ENCODE measurements at regions of chr10 and their contacts with region 1.

Region 1: DNA sequence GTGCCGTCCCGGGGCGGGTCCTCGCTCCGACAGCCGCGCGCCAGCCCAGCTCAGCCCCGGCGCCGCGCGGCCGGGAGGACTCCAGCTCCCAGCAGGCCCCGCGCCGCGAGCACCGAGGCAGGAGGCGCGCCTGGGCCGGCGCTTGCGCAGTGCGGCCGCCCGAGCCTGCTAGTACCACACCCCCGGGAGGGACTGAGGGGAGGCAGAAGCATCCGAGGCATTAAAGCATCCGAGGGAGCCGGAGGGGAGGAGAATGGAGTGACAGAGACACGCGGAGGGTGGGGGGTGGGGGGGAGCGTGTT is at the start of gene GRK5:
- DNase-seq: peak; percentile 90
- ATAC-seq: peak; percentile 86
- H3K4me3 Mint-ChIP-seq: peak within 1 kb of the TSS; percentile 87
- H3K27ac Mint-ChIP-seq: peak within 1 kb of the TSS; percentile 95; the same call in 1 of the 2 replicates
- H3K4me1 Mint-ChIP-seq: peaks cover 40% of the 10 kb centered on the region
- H3K27me3 Mint-ChIP-seq: peaks cover 18% of the 10 kb centered on the region
- CTCF ChIP-seq: no peak
- total RNA-seq, gene GRK5: 1.9 to 2.3 TPM (median 2.2 TPM) in 3 replicates

Region 2: GRCh38 chr10:119070395-119071165 is 136.7 kb before region 1 on chr10:
- CTCF ChIA-PET with region 1: no interaction called
- POLR2A ChIA-PET with region 1: no interaction called
- DNase-seq: no peak
- ATAC-seq: no peak
- H3K4me3 Mint-ChIP-seq: no peak overlapping the region
- H3K27ac Mint-ChIP-seq: peak overlapping the region; percentile 30; the same call in 1 of the 2 replicates
- H3K4me1 Mint-ChIP-seq: 0 out of 2 replicates have a peak, but pooled peaks cover 4% of the 10 kb centered on the region
- H3K27me3 Mint-ChIP-seq: no peaks in the 10 kb centered on the region
- CTCF ChIP-seq: no peak

Region 3: GRCh38 chr10:119217991-119218490 is 10.7 kb after region 1 on chr10:
- CTCF ChIA-PET with region 1: interaction called, 21 read pairs
- POLR2A ChIA-PET with region 1: no interaction called
- DNase-seq: no peak
- ATAC-seq: peak; percentile 38
- H3K4me3 Mint-ChIP-seq: no peak overlapping the region
- H3K27ac Mint-ChIP-seq: peak overlapping the region; percentile 49; the same call in 1 of the 2 replicates
- H3K4me1 Mint-ChIP-seq: peaks cover 33% of the 10 kb centered on the region
- H3K27me3 Mint-ChIP-seq: no peaks in the 10 kb centered on the region
- CTCF ChIP-seq: no peak

Region 4: GRCh38 chr10:119253433-119254174 is 46.3 kb after region 1 on chr10:
- CTCF ChIA-PET with region 1: interaction called, 15 read pairs
- POLR2A ChIA-PET with region 1: no interaction called
- DNase-seq: peak; percentile 20
- ATAC-seq: peak; percentile 72
- H3K4me3 Mint-ChIP-seq: no peak overlapping the region
- H3K27ac Mint-ChIP-seq: no peak overlapping the region
- H3K4me1 Mint-ChIP-seq: peaks cover 41% of the 10 kb centered on the region
- H3K27me3 Mint-ChIP-seq: peaks cover 37% of the 10 kb centered on the region
- CTCF ChIP-seq: no peak

Region 5: GRCh38 chr10:119416855-119417254 is 209.5 kb after region 1 on chr10:
- CTCF ChIA-PET with region 1: interaction called, 28 read pairs
- POLR2A ChIA-PET with region 1: no interaction called
- DNase-seq: peak; percentile 76
- ATAC-seq: peak; percentile 76
- H3K4me3 Mint-ChIP-seq: no peak overlapping the region
- H3K27ac Mint-ChIP-seq: no peak overlapping the region
- H3K4me1 Mint-ChIP-seq: peaks cover 12% of the 10 kb centered on the region
- H3K27me3 Mint-ChIP-seq: no peaks in the 10 kb centered on the region
- CTCF ChIP-seq: peak; percentile 58; the same call in 1 of the 2 replicates

Region 6: GRCh38 chr10:119445311-119445934 is 238.1 kb after region 1 on chr10:
- CTCF ChIA-PET with region 1: interaction called, 25 read pairs
- POLR2A ChIA-PET with region 1: no interaction called
- DNase-seq: peak; percentile 92
- ATAC-seq: peak; percentile 82
- H3K4me3 Mint-ChIP-seq: no peak overlapping the region
- H3K27ac Mint-ChIP-seq: no peak overlapping the region
- H3K4me1 Mint-ChIP-seq: peaks cover 11% of the 10 kb centered on the region
- H3K27me3 Mint-ChIP-seq: no peaks in the 10 kb centered on the region; the same call in 1 of the 2 replicates
- CTCF ChIP-seq: peak; percentile 97

Region 7: GRCh38 chr10:119535305-119535704 is 328.0 kb after region 1 on chr10:
- CTCF ChIA-PET with region 1: no interaction called
- POLR2A ChIA-PET with region 1: no interaction called
- DNase-seq: no peak
- ATAC-seq: no peak
- H3K4me3 Mint-ChIP-seq: no peak overlapping the region
- H3K27ac Mint-ChIP-seq: no peak overlapping the region
- H3K4me1 Mint-ChIP-seq: peaks cover 7% of the 10 kb centered on the region
- H3K27me3 Mint-ChIP-seq: peaks cover 9% of the 10 kb centered on the region
- CTCF ChIP-seq: no peak